SK-MEL-5 (cell line): ENCODE measurements at regions of chr15 and their contacts with region 1.

Region 1: DNA sequence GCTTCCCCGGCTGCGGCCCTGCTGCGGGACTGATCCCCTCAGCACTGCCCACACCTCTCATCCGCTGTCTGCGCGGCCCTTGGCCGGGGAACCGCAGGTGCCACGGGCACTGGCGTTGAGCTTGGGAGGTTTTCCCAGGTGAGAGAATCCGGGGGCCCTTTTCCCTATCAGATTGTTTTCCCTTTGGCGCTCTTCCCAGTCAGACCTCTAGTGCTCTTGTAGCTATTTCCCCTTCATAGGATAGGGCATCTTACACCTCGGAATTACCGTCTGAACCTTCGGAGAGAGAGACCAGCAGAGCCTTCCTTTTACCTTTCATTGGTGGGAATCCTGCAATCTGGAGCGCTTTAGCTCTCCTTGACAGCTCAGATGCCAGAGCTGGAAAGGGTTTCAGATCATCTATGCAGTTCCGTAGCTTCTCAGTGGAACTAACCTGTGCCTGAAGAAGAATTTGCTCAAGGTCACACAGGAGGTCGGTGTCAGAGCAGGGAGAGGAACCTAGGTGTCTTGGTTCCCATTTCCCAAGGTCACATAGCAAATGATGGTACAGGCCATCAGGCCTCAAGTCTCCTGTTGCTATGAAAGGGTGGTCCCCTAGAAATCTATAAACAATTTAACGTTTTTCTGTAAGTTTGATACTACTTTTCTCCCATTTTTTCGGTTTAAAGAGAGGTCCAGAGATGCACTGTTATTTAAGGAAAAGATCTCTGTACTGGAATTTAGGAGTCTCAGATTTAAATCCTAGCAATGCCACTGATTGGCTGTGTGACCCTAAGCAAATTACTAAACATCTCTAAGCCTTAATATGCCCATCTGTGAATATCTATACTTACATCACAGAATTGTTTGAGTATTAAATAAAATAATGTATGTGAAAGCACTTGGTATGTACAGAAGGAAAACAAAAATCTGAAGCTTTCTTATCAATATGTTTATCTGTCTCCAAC is 916 bp downstream of the IDH3A start:
- DNase-seq: peak; percentile 26

Region 2: GRCh38 chr15:78264304-78265136 is 114.4 kb after region 1 on chr15 and contains the start of gene DNAJA4:
- in situ Hi-C with region 1: loop called (anchors 25 kb)
- DNase-seq: no peak
- total RNA-seq, gene DNAJA4: 8.5 and 8.7 TPM in 2 replicates